ENCODE measurements at regions of chr19 and their contacts with region 1.

Region 1: DNA sequence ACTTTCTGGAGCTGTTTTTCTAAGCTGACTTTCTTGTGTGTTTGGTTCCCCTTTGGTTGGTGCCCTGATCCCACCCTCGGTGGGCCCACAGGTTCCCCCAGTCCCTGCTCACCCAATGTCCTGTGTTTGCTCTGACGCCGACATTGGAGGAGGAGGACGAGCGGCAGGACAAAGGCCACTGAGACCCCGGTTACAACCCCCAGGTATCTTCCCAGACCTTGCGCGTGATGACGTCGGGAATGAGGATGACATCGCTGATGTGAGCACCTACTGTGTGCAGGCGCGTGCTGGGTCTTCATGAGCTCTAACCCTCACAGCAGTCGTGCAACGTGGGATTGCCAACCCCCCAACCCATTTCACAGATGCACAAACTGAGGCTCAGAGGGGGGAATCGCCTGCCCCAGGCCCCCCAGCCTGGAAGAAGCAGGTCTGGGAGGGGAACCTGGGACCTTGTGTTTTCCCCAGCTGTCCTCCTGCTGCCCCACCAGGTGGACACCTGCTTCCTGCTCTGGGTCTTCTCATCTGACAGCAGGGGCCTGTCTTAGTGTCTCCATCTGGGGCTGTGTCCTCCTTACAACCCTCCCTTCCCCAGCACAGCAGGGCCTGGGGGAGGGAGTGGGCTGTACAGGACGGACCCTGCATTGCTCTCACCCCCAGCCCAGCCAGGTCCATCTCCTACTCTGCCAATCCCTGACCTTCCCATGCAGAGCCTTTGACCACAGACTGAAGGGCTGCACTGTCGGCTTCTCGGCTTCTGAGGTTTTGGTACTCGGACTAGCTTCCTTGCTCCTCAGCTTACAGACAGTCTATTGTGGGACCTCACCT is 4.7 kb upstream of the LILRA6 start:
- DNase-seq: no peak
- H3K4me3 ChIP-seq: no peak overlapping the region
- H3K27ac ChIP-seq: peak overlapping the region in 3 of 5 donors; percentile 44 to 75 (median 65)
- H3K4me1 ChIP-seq: peaks cover 0 to 16% (median 0%) of the 10 kb centered on the region in 4 donors
- H3K27me3 ChIP-seq: peaks cover 0 to 38% (median 7%) of the 10 kb centered on the region in 3 donors
- CTCF ChIP-seq: no peak
- EP300 ChIP-seq: no peak
- POLR2A ChIP-seq: no peak

Region 2: GRCh38 chr19:54168174-54168917 is 79.0 kb before region 1 on chr19:
- intact Hi-C with region 1: no loop called
- DNase-seq: peak; percentile 94 to 96
- H3K4me3 ChIP-seq: no peak overlapping the region
- H3K27ac ChIP-seq: no peak overlapping the region
- H3K4me1 ChIP-seq: peaks cover 15 to 42% (median 29%) of the 10 kb centered on the region in 4 donors
- H3K27me3 ChIP-seq: peaks cover 0 to 45% (median 4%) of the 10 kb centered on the region in 3 donors
- CTCF ChIP-seq: peak in 5 of 7 experiments; percentile 65 to 96 (median 84)
- EP300 ChIP-seq: no peak
- POLR2A ChIP-seq: no peak

Region 3: DNA sequence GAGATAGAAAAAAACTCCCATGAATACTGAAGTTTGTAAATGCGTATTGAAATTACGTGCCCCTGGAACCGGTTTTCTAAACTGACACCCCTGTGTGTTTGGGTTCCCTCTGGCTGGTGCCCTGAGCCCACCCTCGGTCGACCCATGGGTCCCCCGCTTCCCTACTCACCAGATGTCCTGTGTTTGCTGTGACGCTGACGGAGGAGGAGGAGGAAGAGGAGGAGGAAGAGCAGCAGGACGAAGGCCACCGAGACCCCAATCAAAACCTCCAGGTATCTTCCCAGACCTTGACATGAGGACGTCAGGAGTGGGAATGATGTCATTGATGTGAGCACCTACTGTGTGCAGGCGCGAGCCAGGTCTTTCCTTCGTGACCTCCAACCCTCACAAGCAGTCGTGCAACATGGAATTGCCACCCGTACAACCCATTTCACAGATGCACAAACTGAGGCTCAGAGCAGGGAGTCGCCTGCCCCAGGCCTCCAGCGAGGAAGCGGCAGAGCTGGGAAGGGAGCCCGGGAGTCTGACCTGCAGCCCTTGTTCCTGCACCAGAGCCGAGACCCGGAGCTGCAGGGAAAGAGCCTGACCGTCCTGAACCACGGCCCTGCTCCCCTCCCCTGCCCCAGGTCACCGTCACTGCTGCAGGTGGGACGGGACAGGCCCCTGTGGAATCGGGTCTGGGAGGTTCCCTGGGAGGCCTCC is 28.2 kb before region 1 on chr19:
- intact Hi-C with region 1: loop called (anchors 2 kb)
- DNase-seq: no peak
- H3K4me3 ChIP-seq: no peak overlapping the region
- H3K27ac ChIP-seq: no peak overlapping the region
- H3K4me1 ChIP-seq: peaks cover 0 to 7% (median 0%) of the 10 kb centered on the region in 4 donors
- H3K27me3 ChIP-seq: peaks cover 0 to 36% (median 16%) of the 10 kb centered on the region in 3 donors
- CTCF ChIP-seq: no peak
- EP300 ChIP-seq: no peak
- POLR2A ChIP-seq: no peak

Region 4: GRCh38 chr19:54325194-54325621 is 77.9 kb after region 1 on chr19:
- intact Hi-C with region 1: no loop called
- DNase-seq: peak in 1 of 2 donors; percentile 74
- H3K4me3 ChIP-seq: no peak overlapping the region
- H3K27ac ChIP-seq: no peak overlapping the region
- H3K4me1 ChIP-seq: no peaks in the 10 kb centered on the region
- H3K27me3 ChIP-seq: peaks cover 0 to 20% (median 0%) of the 10 kb centered on the region in 3 donors
- CTCF ChIP-seq: peak in 5 of 7 experiments; percentile 10 to 69 (median 54)
- EP300 ChIP-seq: no peak
- POLR2A ChIP-seq: no peak

Measured in stomach (tissue), 19 donors.